CD4-positive, alpha-beta T cell (primary cell): ENCODE measurements at regions of chr11 and their contacts with region 1.

Region 1: DNA sequence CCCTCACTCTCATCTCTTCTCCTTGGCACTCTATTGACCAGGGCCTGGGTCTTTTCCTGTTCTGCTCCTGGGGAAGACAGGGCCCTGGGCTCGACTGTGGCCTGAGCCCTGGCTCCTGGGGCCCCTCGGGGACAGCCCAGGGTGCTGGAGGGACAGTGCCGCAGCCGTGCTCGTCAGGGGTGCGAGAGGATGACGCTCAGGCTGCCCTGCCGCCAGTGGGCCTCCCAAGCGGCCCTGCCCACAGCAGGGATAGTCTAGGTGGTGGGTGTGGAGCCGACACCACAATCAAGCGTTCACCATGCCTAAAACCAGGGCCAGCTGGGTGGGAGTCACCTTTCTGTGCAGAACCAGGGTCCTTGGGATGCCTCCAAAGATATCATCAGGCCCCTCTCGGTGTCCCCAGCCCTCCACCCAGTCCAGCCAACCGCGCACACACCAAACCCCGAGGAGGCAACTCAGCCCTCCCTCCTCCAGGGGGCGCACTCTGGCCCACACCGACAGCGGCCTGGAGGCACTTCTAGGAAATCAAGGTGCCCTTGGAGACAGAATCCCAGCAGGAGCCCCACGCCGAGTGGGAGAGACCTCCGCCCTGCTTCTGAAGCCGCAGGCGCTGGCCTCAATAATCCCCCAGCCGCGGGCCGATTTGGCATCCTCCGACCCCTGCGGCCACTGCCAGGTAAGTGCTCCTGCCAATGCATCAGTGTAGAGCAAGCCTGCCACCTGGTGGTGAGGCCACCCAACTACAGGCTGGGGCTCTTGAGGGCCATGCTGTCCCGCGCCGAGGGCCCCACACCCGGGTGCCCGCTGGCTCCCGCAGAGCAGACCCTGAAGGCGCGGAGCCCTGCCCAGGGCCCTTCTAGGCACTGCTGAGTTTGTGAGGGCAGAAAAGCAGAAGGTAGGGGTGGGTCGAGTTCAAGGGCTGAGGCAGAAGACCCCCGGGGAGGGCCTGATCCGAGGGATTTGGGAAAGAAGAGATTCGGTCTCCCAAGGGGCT is 496.4 kb downstream of the BUD13 start:
- DNase-seq: peak; percentile 45 to 76 (median 58)
- ATAC-seq: peak; percentile 63
- H3K4me3 ChIP-seq: peak overlapping the region; percentile 22
- H3K4me3 Mint-ChIP-seq: no peak overlapping the region
- H3K27ac ChIP-seq: no peak overlapping the region
- H3K27ac Mint-ChIP-seq: no peak overlapping the region
- H3K4me1 ChIP-seq: peaks cover 8% of the 10 kb centered on the region
- H3K4me1 Mint-ChIP-seq: no peaks in the 10 kb centered on the region
- H3K27me3 ChIP-seq: peaks cover 4 to 5% of the 10 kb centered on the region in 2 experiments
- H3K27me3 Mint-ChIP-seq: peaks cover 31% of the 10 kb centered on the region
- CTCF ChIP-seq: peak; percentile 77

Region 2: GRCh38 chr11:114280696-114281095 is 1995.7 kb before region 1 on chr11:
- CTCF ChIA-PET with region 1: no interaction called
- POLR2A ChIA-PET with region 1: no interaction called
- intact Hi-C with region 1: loop called in 1 of 2 experiments (anchors 5 kb)
- DNase-seq: peak in 4 of 14 experiments; percentile 13 to 40 (median 26)
- ATAC-seq: no peak
- H3K4me3 ChIP-seq: no peak overlapping the region
- H3K4me3 Mint-ChIP-seq: no peak overlapping the region
- H3K27ac ChIP-seq: no peak overlapping the region
- H3K27ac Mint-ChIP-seq: no peak overlapping the region
- H3K4me1 ChIP-seq: no peaks in the 10 kb centered on the region
- H3K4me1 Mint-ChIP-seq: no peaks in the 10 kb centered on the region
- H3K27me3 ChIP-seq: peaks cover 0 to 6% of the 10 kb centered on the region in 2 experiments
- H3K27me3 Mint-ChIP-seq: peaks cover 32% of the 10 kb centered on the region
- CTCF ChIP-seq: peak; percentile 14

Region 3: DNA sequence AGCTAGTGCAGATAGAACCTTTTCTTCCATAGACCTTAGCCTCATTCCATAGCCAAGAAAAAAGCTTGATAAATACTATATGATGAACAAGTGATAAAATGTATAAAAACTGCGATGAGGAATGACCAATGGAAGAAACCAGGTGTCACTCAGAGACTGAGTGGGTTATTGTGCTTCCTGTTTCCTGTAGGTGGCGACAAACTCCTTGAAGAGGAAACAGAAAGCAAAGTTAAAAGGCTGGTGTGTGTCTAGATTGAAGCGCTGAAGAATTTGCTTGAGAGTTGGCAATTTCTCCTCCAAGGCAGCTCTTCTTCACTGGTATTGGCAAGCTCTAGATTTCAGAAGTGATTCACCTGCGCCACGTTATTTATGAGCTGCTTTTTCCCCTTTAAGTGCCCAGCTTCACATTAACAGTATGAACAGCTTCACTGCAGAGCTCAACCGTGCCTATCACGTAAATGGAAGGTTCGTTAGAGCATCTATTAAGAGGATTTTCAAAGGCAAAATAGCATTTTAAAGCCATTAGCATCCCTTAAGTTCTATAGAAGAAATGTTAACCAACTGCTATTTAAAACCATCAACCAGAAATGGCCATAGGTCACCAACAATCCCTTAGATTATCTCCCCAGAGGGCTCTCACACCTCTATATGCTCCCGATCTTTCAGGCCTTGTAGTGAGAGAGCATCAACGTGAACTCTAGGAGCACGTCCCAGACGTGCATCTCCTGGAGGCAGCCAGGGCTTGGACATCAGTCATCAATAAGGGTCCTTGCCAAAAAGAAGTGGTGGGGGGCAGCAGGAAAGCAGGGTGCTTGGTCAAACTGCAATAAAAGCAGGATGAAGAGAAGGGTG is 951.5 kb before region 1 on chr11:
- CTCF ChIA-PET with region 1: no interaction called
- POLR2A ChIA-PET with region 1: no interaction called
- intact Hi-C with region 1: loop called in 1 of 2 experiments (anchors 5 kb)
- DNase-seq: peak in 4 of 14 experiments; percentile 5 to 62 (median 57)
- ATAC-seq: peak; percentile 41
- H3K4me3 ChIP-seq: no peak overlapping the region
- H3K4me3 Mint-ChIP-seq: no peak overlapping the region
- H3K27ac ChIP-seq: no peak overlapping the region
- H3K27ac Mint-ChIP-seq: no peak overlapping the region
- H3K4me1 ChIP-seq: no peaks in the 10 kb centered on the region
- H3K4me1 Mint-ChIP-seq: peaks cover 9% of the 10 kb centered on the region
- H3K27me3 ChIP-seq: no peaks in the 10 kb centered on the region
- H3K27me3 Mint-ChIP-seq: no peaks in the 10 kb centered on the region
- CTCF ChIP-seq: peak; percentile 60

Region 4: GRCh38 chr11:115334932-115335788 is 941.2 kb before region 1 on chr11:
- CTCF ChIA-PET with region 1: no interaction called
- POLR2A ChIA-PET with region 1: no interaction called
- intact Hi-C with region 1: loop called in 1 of 2 experiments (anchors 5 kb)
- DNase-seq: peak in 3 of 14 experiments; percentile 10 to 28 (median 25)
- ATAC-seq: no peak
- H3K4me3 ChIP-seq: no peak overlapping the region
- H3K4me3 Mint-ChIP-seq: no peak overlapping the region
- H3K27ac ChIP-seq: no peak overlapping the region
- H3K27ac Mint-ChIP-seq: no peak overlapping the region
- H3K4me1 ChIP-seq: no peaks in the 10 kb centered on the region
- H3K4me1 Mint-ChIP-seq: no peaks in the 10 kb centered on the region
- H3K27me3 ChIP-seq: no peaks in the 10 kb centered on the region
- H3K27me3 Mint-ChIP-seq: no peaks in the 10 kb centered on the region
- CTCF ChIP-seq: peak; percentile 51